A673 (cell line): ENCODE measurements at regions of chr15 and their contacts with region 1.

Region 1: GRCh38 chr15:74240002-74240568 is 4.0 kb downstream of the CCDC33 start:
- DNase-seq: peak; percentile 97
- H3K4me3 ChIP-seq: no peak overlapping the region
- H3K27ac ChIP-seq: peak overlapping the region; percentile 56
- H3K4me1 ChIP-seq: peaks cover 48% of the 10 kb centered on the region
- H3K27me3 ChIP-seq: no peaks in the 10 kb centered on the region
- CTCF ChIP-seq: peak; percentile 75

Region 2: DNA sequence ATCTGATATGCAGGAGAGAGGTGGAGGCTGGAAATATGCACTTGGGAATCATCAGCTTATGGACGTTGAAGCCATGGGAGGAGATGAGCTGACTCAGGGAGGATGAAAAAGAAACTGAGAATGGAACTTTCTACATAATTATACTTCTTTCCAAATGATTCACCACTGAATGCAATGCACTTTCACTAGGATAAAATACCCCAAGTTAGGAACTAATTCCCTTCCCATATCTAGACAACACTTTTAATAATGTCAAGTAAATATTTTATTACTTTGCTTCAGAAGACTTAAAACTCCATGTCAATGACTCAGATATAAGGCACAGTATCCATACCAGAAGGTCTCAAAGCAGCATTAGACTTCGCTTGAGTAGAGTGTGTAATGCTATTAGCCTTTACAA is 631.1 kb before region 1 on chr15:
- CTCF ChIA-PET with region 1: no interaction called
- POLR2A ChIA-PET with region 1: no interaction called
- intact Hi-C with region 1: no loop called
- DNase-seq: no peak
- H3K4me3 ChIP-seq: no peak overlapping the region
- H3K27ac ChIP-seq: no peak overlapping the region
- H3K4me1 ChIP-seq: peaks cover 13% of the 10 kb centered on the region
- H3K27me3 ChIP-seq: no peaks in the 10 kb centered on the region
- CTCF ChIP-seq: no peak

Region 3: DNA sequence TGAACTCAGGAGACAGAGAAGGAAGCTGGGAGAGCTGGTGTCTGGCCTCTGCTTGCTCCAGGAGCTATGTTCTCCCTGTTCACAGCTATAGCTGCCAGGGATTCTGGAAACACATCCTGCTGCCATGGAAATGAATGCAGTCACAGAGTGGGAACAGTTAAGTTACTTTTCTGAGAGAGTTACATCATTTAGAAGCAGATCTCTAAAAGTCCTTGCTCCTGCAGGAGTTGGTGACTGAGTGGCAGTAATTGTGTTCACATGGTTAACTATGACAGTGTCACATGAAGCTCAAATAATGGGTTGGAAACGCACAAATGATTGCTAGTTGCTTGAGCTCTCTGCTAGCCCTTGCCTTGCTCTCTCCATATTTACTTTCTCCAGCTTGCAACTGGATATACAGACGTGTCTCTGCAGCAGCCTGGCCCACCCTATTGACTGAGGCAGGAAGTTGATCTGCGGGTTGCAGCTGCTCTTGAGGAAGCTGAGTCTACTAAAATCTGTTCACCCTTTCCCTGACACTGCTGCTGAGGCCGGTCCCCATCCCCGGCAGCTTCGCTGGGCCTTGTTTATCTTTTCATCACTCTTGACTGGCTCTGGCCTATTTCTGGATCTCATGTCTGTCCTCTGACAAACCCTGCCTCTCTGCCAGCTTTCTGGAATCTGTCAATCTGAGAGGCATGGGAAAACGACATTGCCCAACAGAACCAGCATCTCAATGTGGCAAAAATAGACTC is 83.2 kb before region 1 on chr15:
- CTCF ChIA-PET with region 1: no interaction called
- POLR2A ChIA-PET with region 1: no interaction called
- intact Hi-C with region 1: no loop called
- DNase-seq: no peak
- H3K4me3 ChIP-seq: no peak overlapping the region
- H3K27ac ChIP-seq: no peak overlapping the region
- H3K4me1 ChIP-seq: no peaks in the 10 kb centered on the region
- H3K27me3 ChIP-seq: no peaks in the 10 kb centered on the region
- CTCF ChIP-seq: no peak

Region 4: DNA sequence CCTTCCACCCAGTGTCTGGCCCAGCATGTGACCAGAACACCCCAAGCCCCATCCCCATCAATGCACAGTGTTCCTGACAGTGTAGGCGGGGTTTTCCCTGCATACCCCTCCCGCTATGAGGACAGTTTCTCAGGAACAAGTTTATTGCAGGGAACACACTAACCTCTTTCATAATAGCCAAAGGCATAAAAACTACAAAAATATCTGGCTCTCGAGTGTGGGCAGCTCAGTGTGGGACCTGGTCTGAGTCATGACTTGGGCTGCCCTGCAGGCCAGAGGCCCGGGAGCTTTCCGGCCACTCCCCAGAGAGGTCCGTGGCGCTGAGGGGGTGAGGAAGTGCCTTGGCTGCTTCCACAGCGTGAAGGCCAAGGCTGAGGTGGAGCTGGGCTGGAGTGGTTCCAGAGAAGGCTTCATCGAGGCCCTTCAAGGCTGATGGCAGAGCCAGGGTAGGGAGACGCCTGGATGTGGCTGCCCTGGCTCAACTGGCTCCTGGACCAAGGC is 60.7 kb before region 1 on chr15:
- CTCF ChIA-PET with region 1: no interaction called
- POLR2A ChIA-PET with region 1: no interaction called
- intact Hi-C with region 1: no loop called
- DNase-seq: no peak
- H3K4me3 ChIP-seq: no peak overlapping the region
- H3K27ac ChIP-seq: no peak overlapping the region
- H3K4me1 ChIP-seq: peaks cover 10% of the 10 kb centered on the region
- H3K27me3 ChIP-seq: no peaks in the 10 kb centered on the region
- CTCF ChIP-seq: no peak

Region 5: DNA sequence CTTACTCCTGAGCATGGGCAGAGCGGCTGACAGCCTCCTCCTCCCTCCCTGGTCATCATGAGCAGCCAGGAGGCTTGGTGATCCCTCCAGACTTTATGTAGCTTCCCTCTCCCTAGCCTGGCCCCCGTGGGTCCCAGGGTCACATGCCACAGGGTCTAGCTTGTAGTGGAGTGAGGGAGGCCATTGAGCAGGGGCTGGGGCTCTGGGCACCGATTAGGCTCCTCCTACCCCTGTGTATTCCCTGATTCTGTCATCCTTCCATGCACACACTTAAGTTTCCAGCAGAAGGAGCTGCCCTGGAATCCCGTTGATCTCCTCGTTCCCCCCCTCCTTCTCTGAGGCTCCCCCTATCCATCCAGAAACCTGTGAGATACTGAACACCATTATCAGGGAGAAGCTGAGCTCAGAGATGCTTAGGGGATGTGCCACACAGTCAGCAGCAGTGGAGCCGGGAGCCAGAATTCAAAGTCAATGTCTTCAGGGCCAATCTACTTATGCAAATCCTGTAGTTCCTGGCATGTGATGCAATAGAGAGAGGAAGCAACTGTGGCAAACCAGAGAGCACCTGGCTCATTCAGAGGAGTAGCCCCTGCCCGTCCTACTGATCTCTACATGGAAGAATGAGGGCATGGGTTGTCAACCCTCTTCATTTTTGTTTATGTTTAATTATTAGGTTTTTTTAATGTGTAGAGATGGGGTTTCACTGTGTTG is 13.3 kb after region 1 on chr15:
- CTCF ChIA-PET with region 1: no interaction called
- POLR2A ChIA-PET with region 1: interaction called, 11 read pairs
- intact Hi-C with region 1: no loop called
- DNase-seq: peak; percentile 62
- H3K4me3 ChIP-seq: no peak overlapping the region
- H3K27ac ChIP-seq: no peak overlapping the region
- H3K4me1 ChIP-seq: peaks cover 14% of the 10 kb centered on the region
- H3K27me3 ChIP-seq: no peaks in the 10 kb centered on the region
- CTCF ChIP-seq: no peak

Region 6: DNA sequence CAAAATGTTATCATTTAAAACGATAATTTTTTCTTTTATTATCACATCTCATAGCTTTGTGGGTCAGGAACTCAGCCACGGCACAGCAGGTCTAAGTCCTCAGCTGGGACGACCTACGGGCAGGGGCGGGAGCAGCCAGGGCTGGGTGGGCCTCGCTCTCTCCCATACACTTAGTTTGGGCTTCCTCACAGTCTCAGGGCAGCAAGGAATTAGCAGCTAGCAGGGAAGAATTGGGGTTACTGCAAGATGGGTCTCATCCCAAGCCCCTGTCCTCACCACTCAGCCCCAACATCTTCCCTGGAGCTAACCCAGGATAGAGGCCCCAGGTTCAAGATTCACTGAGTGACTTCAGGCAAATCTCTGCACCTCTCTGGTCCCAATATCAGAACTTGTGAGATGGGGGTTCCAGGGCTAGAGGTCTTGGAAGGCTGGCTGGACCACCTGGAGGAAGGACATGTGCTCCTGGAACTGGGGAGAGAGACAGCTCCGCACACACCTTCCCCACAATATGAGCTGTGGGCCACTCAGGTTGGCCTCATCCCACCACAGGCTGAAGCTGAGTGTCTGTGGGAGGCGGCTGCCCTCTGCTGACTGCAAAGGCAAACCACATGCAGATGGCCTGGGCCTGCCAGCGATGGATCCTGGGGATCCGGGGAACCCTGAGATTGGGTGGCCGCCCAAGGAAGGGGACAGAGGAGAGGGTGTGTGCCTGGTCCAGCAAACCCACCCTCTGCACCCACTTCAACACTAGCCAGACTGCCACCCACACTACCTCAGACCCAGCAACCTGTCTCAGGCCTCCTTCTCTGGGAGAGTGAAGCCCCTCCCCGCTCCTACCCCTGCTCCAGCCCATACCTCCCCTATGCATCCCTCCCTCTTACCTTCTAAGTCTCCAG is 82.3 kb after region 1 on chr15:
- CTCF ChIA-PET with region 1: interaction called, 11 read pairs
- POLR2A ChIA-PET with region 1: no interaction called
- intact Hi-C with region 1: no loop called
- DNase-seq: peak; percentile 76
- H3K4me3 ChIP-seq: no peak overlapping the region
- H3K27ac ChIP-seq: no peak overlapping the region
- H3K4me1 ChIP-seq: peaks cover 29% of the 10 kb centered on the region
- H3K27me3 ChIP-seq: no peaks in the 10 kb centered on the region
- CTCF ChIP-seq: peak; percentile 92

Region 7: DNA sequence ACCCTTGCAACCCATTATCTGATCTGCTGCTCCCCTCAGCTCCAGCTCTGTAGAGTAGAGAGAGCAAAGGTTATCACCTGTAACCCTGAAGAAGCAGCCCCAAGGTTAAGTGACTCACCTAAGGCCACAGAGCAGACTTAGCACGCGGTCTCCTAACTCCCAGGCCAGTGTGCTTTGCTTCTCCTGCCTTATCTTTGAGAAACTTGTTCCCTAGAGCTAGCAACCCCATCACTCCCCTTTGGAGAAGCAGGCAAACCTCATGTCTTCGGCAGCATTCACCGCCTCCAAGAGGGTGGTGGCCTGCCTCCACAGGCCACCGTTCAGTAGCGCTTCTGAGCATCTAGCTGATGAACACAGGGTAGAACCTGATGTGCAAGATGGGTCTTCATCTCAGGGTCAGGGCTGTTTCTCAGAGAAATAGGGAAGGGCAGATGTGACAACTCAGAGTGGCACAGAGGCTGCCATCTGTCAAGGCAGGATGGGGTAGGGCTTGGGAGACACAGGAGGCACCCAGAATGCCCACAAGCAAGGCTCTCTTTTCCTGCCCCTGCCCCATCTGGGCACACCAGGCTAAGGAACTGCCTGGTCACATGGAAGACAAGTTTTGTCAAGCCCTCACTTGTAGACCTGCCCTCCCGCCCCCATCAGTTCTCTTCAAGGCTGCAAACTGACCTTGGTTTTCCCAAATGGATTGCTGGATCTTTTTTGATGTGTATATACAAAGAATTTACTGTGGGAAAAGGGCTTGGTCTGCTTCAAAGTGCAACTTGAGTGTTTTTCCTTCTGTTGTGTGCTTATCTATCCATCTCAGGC is 340.7 kb after region 1 on chr15:
- CTCF ChIA-PET with region 1: no interaction called
- POLR2A ChIA-PET with region 1: no interaction called
- intact Hi-C with region 1: no loop called
- DNase-seq: no peak
- H3K4me3 ChIP-seq: no peak overlapping the region
- H3K27ac ChIP-seq: no peak overlapping the region
- H3K4me1 ChIP-seq: no peaks in the 10 kb centered on the region
- H3K27me3 ChIP-seq: no peaks in the 10 kb centered on the region
- CTCF ChIP-seq: no peak